ENCODE measurements at regions of chr3 and their contacts with region 1.

Region 1: DNA sequence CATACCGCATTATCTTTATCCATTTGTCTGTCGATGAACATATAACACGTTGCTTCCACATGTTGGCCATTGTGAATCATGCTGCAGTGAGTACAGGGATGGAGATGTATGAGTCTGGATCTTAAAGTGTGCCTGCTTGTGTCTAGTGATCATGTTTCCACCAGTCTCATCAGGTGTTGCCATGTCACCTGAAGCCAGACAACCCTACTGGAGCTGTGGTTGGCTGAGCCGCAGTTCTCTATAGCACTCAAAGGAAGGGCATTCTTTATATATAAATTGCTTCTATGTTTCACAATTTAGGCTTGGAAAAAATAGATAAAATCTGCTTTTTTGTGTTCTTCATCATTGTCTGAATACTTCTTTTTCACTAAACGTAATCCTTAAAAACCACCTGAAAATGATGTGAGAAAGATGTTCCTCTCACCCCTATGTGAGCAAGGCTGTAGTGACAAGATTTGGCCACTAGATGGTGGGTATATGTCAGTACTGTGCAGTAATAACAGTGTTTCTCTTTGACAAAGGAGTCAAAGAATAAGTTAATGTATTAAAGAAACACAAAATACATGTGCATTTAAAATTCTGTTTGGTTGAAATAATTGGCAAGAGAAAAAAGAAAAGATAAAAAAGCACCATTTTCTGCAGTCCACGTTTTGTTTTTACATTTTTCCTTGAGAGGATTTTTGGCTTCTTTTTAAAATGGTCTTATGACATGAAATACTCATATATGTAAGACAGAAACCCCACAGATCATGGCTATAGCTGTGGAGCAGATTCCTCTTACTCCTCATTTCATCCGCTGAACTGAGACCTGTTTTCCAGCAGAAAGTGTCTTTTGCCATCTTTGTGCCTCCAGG is 394.5 kb upstream of the DPPA4 start:
- DNase-seq: peak; percentile 77
- H3K4me3 Mint-ChIP-seq: no peak overlapping the region
- H3K27ac Mint-ChIP-seq: no peak overlapping the region
- H3K4me1 Mint-ChIP-seq: peaks cover 3% of the 10 kb centered on the region
- H3K27me3 Mint-ChIP-seq: no peaks in the 10 kb centered on the region

Region 2: GRCh38 chr3:109678600-109678999 is 53.2 kb before region 1 on chr3:
- CTCF ChIA-PET with region 1: no interaction called
- intact Hi-C with region 1: no loop called
- DNase-seq: no peak
- H3K4me3 Mint-ChIP-seq: no peak overlapping the region
- H3K27ac Mint-ChIP-seq: no peak overlapping the region
- H3K4me1 Mint-ChIP-seq: no peaks in the 10 kb centered on the region
- H3K27me3 Mint-ChIP-seq: no peaks in the 10 kb centered on the region

Region 3: DNA sequence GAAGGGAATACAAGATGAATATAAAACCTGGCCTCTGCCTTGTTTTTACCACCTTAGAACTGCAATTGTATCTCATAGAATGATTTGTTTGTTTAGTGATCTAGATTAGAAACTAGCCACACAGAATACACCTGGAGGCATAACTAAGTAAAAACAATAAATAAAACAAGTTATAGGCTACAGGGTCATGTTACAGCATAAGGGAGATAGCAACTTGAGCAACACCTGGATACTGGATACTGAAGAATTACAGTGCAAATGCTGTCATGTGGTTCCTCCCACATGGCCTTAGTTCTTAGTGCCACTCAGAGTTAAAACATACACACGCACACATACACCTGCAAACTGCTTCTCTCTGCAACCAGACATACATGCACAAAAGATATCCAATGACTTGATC is 168.9 kb after region 1 on chr3:
- CTCF ChIA-PET with region 1: no interaction called
- intact Hi-C with region 1: loop called (anchors 5 kb)
- DNase-seq: no peak
- H3K4me3 Mint-ChIP-seq: no peak overlapping the region
- H3K27ac Mint-ChIP-seq: no peak overlapping the region
- H3K4me1 Mint-ChIP-seq: peaks cover 16% of the 10 kb centered on the region
- H3K27me3 Mint-ChIP-seq: no peaks in the 10 kb centered on the region

Region 4: DNA sequence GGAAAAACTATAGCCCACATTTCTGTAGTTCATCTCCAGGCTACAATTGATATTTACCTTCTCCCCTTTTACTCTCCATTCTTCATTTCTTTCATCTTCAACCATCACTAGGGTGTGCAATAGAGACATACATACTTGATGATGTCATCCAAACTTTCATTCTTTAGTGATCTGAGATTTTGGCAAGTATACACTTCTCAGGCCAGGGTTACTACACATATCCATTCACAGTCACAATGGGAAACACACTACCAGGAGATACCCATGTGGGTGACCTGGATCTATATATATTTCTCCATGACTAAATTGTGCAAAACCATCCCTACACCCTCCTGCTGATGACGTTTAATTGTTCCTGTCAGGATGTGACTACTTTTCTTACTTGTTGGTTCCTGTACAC is 375.0 kb after region 1 on chr3:
- CTCF ChIA-PET with region 1: no interaction called
- intact Hi-C with region 1: loop called (anchors 10 kb)
- DNase-seq: no peak
- H3K4me3 Mint-ChIP-seq: no peak overlapping the region
- H3K27ac Mint-ChIP-seq: no peak overlapping the region
- H3K4me1 Mint-ChIP-seq: no peaks in the 10 kb centered on the region
- H3K27me3 Mint-ChIP-seq: no peaks in the 10 kb centered on the region

Region 5: GRCh38 chr3:111080413-111080812 is 1348.6 kb after region 1 on chr3:
- CTCF ChIA-PET with region 1: no interaction called
- intact Hi-C with region 1: loop called (anchors 1 kb)
- DNase-seq: no peak
- H3K4me3 Mint-ChIP-seq: no peak overlapping the region
- H3K27ac Mint-ChIP-seq: no peak overlapping the region
- H3K4me1 Mint-ChIP-seq: no peaks in the 10 kb centered on the region
- H3K27me3 Mint-ChIP-seq: peaks cover 2% of the 10 kb centered on the region

Measured in activated naive CD4-positive, alpha-beta T cell treated with anti-CD3 and anti-CD28 coated beads for 36 hours (primary cell).